A549 (cell line): ENCODE measurements at regions of chr5 and their contacts with region 1.

Region 1: DNA sequence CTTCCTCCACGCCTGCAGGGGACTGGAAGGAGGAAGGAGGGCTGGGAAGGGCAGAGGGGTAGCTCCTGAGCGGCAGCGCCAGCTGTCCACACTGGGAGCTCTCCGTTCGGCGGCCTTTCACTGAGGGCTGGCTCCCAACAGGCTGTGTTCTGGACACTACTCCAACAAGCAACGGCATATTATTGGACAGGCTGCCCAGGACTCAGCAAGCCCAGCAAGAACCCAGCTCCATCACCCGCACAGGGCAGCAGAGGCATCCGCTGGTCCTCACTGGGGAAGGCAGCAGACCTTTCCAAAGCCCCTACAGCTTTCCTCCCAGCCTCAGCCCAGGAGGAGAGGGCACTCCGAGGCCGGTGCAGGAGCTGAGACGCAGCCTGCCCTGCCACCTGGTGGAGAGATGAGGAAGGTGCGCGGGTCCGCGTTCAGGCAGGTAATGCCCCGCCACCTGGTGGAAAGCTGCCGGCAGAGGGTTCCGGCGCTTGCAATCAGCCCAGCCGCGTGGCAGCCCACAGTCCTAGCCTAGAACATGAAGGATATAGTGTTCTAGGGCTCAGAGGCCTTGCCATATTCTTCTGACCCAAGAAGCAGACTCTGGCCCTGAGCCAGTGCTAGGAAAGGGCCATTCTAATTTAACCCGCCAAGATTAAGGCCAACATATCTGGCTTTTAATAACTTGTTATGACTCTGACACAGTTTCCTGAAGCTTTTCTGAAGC is 74.4 kb downstream of the NRG2 start:
- DNase-seq: peak; percentile 81 to 90
- ATAC-seq: peak; percentile 97 to 99
- H3K4me3 ChIP-seq: no peak overlapping the region
- H3K27ac ChIP-seq: no peak overlapping the region
- H3K4me1 ChIP-seq: no peaks in the 10 kb centered on the region
- CTCF ChIP-seq: peak; percentile 98
- EP300 ChIP-seq: no peak
- POLR2A ChIP-seq: no peak
- RAD21 ChIP-seq: peak; percentile 90 to 94

Region 2: DNA sequence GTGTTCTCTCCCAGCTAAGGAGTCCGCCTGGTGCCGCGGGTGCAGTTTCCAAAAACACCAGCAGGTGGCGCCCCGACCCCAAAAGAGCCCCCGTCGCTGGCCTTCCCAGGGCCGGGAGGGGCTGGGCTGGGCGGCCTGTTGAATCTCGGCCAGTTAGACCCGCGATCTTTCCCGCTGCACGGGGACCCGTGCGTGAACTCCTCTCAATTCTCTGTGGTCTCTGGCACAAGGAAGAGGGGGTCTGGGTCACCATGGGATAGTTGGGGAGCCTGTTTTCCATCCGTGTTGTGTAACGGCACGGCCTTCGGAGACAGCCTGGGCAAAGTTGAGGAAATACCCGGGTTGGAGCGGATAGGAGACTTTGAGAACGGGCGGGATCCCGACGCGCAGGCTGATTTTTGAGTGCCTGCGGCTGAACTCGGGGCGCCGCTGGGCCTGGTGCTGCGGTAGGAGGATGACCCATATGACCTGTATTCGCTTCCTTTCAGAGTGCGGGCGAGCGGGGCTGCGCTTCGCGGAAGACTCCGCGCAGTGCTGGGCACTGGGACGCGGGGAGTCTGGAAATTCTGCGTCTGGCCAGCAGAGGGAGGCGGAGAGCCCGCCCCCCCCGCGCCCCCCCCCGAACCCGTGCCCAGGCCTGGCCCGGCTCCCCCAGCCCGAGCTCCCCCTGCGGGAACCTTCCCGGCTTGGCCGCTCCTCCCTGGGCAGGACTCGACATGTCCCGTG is 181.0 kb before region 1 on chr5:
- CTCF ChIA-PET with region 1: interaction called, 361 read pairs
- POLR2A ChIA-PET with region 1: interaction called, 5 read pairs
- DNase-seq: peak; percentile 76 to 97
- ATAC-seq: peak; percentile 65 to 90
- H3K4me3 ChIP-seq: peak overlapping the region; percentile 63
- H3K27ac ChIP-seq: peak overlapping the region; percentile 81
- H3K4me1 ChIP-seq: 0 out of 3 replicates have a peak, but pooled peaks cover 4% of the 10 kb centered on the region
- CTCF ChIP-seq: peak; percentile 87
- EP300 ChIP-seq: no peak
- POLR2A ChIP-seq: no peak
- RAD21 ChIP-seq: peak; percentile 95 to 98

Region 3: DNA sequence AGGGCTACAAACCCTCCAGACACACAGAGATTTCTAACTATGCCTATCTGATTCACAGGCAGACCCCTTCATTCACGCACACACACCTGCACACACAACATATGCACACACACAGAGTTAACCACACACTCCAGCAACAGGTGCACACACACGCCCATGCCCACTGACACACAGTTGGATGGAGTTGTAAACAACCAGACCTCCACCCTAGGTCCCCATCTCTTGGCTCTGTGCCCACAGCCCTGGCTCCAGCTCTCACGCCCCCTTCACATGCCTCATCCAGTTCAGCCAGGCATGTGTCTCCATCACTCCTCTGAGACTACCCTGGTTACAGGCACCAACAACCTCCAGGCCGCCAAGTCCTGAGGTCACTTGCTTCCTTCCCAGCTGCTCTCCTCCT is 112.0 kb before region 1 on chr5:
- CTCF ChIA-PET with region 1: interaction called, 48 read pairs
- POLR2A ChIA-PET with region 1: no interaction called
- DNase-seq: no peak
- ATAC-seq: no peak
- H3K4me3 ChIP-seq: no peak overlapping the region
- H3K27ac ChIP-seq: no peak overlapping the region
- H3K4me1 ChIP-seq: no peaks in the 10 kb centered on the region
- CTCF ChIP-seq: no peak
- EP300 ChIP-seq: no peak
- POLR2A ChIP-seq: no peak
- RAD21 ChIP-seq: no peak

Region 4: GRCh38 chr5:139900546-139901250 is 68.0 kb before region 1 on chr5:
- CTCF ChIA-PET with region 1: interaction called, 31 read pairs
- POLR2A ChIA-PET with region 1: no interaction called
- DNase-seq: no peak
- ATAC-seq: no peak
- H3K4me3 ChIP-seq: no peak overlapping the region
- H3K27ac ChIP-seq: no peak overlapping the region
- H3K4me1 ChIP-seq: peaks cover 5% of the 10 kb centered on the region; the same call in 1 of the 3 replicates
- CTCF ChIP-seq: no peak
- EP300 ChIP-seq: no peak
- POLR2A ChIP-seq: no peak
- RAD21 ChIP-seq: no peak

Region 5: GRCh38 chr5:139949710-139950109 is 19.0 kb before region 1 on chr5:
- CTCF ChIA-PET with region 1: interaction called, 67 read pairs
- POLR2A ChIA-PET with region 1: no interaction called
- DNase-seq: no peak
- ATAC-seq: no peak
- H3K4me3 ChIP-seq: no peak overlapping the region
- H3K27ac ChIP-seq: no peak overlapping the region
- H3K4me1 ChIP-seq: no peaks in the 10 kb centered on the region
- CTCF ChIP-seq: no peak
- EP300 ChIP-seq: no peak
- POLR2A ChIP-seq: no peak
- RAD21 ChIP-seq: no peak

Region 6: GRCh38 chr5:140020601-140021177 is 52.0 kb after region 1 on chr5:
- CTCF ChIA-PET with region 1: interaction called, 16 read pairs
- POLR2A ChIA-PET with region 1: no interaction called
- DNase-seq: no peak
- ATAC-seq: no peak
- H3K4me3 ChIP-seq: no peak overlapping the region
- H3K27ac ChIP-seq: no peak overlapping the region
- H3K4me1 ChIP-seq: no peaks in the 10 kb centered on the region
- CTCF ChIP-seq: no peak
- EP300 ChIP-seq: no peak
- POLR2A ChIP-seq: no peak
- RAD21 ChIP-seq: no peak